ENCODE measurements at regions of chr5 and their contacts with region 1.

Region 1: GRCh38 chr5:13987843-13988464 is 43.5 kb upstream of the DNAH5 start:
- DNase-seq: peak; percentile 42
- ATAC-seq: peak; percentile 64
- H3K4me3 ChIP-seq: no peak overlapping the region
- H3K27ac ChIP-seq: no peak overlapping the region
- H3K4me1 ChIP-seq: peaks cover 7 to 14% of the 10 kb centered on the region in 2 experiments
- H3K27me3 ChIP-seq: no peaks in the 10 kb centered on the region
- CTCF ChIP-seq: peak; percentile 72 to 92 (median 75)
- POLR2A ChIP-seq: no peak
- RAD21 ChIP-seq: peak; percentile 92

Region 2: GRCh38 chr5:14108170-14108996 is 120.4 kb after region 1 on chr5:
- CTCF ChIA-PET with region 1: no interaction called
- POLR2A ChIA-PET with region 1: no interaction called
- RAD21 ChIA-PET with region 1: no interaction called
- intact Hi-C with region 1: loop called (anchors 5 kb)
- DNase-seq: peak; percentile 71
- ATAC-seq: peak; percentile 85
- H3K4me3 ChIP-seq: peak overlapping the region in 1 of 2 experiments; percentile 27; a peak in 2 of 4 replicates
- H3K27ac ChIP-seq: no peak overlapping the region
- H3K4me1 ChIP-seq: peaks cover 18 to 40% of the 10 kb centered on the region in 2 experiments
- H3K27me3 ChIP-seq: no peaks in the 10 kb centered on the region
- CTCF ChIP-seq: peak; percentile 57 to 80 (median 73); a peak in 5 of 6 replicates
- POLR2A ChIP-seq: no peak
- RAD21 ChIP-seq: peak; percentile 82